HCT116 (cell line): ENCODE measurements at regions of chr15 and their contacts with region 1.

Region 1: DNA sequence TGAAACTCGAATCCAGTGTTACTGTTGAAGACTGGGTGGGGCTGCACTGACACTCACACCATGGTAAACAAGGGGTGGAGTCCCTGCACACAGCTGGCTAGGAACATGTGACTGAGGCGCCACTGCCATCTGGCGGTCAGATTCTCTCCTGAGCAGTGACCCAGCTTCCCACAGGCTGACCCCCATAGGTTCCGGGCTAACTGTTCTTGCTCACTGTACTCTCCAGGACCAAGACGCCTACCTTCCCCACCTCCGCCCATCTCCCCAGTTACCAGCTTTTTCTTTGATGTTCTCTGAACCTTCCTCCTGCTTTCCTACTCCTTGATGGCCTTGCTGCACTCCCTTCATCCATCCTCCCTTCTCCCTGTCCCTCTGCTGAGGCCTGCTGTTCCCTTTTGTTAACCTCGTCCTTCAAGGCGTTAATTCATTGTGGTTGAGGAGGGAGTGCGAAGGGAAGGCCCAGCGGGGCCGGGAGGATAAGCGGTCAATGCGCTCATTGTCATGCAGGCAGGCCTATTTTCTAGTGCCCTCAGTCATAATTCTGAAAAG is 115.2 kb downstream of the ATP8B4 start:
- DNase-seq: peak; percentile 80
- ATAC-seq: peak; percentile 100
- H3K4me3 ChIP-seq: no peak overlapping the region
- H3K27ac ChIP-seq: no peak overlapping the region
- H3K4me1 ChIP-seq: peaks cover 2 to 5% of the 10 kb centered on the region in 2 experiments; a peak in 3 of 4 replicates
- H3K27me3 ChIP-seq: no peaks in the 10 kb centered on the region
- CTCF ChIP-seq: peak; percentile 38 to 89 (median 84); a peak in 5 of 6 replicates
- POLR2A ChIP-seq: no peak
- RAD21 ChIP-seq: peak; percentile 77

Region 2: GRCh38 chr15:49471733-49472132 is 532.1 kb before region 1 on chr15:
- CTCF ChIA-PET with region 1: interaction called, 10 read pairs
- POLR2A ChIA-PET with region 1: no interaction called
- RAD21 ChIA-PET with region 1: no interaction called
- intact Hi-C with region 1: no loop called
- DNase-seq: no peak
- ATAC-seq: no peak
- H3K4me3 ChIP-seq: no peak overlapping the region
- H3K27ac ChIP-seq: no peak overlapping the region
- H3K4me1 ChIP-seq: no peaks in the 10 kb centered on the region
- H3K27me3 ChIP-seq: no peaks in the 10 kb centered on the region
- CTCF ChIP-seq: no peak
- POLR2A ChIP-seq: no peak
- RAD21 ChIP-seq: no peak

Region 3: GRCh38 chr15:50084932-50085331 is 81.1 kb after region 1 on chr15:
- CTCF ChIA-PET with region 1: no interaction called
- POLR2A ChIA-PET with region 1: no interaction called
- RAD21 ChIA-PET with region 1: no interaction called
- intact Hi-C with region 1: no loop called
- DNase-seq: no peak
- ATAC-seq: no peak
- H3K4me3 ChIP-seq: no peak overlapping the region
- H3K27ac ChIP-seq: no peak overlapping the region
- H3K4me1 ChIP-seq: no peaks in the 10 kb centered on the region
- H3K27me3 ChIP-seq: no peaks in the 10 kb centered on the region
- CTCF ChIP-seq: no peak
- POLR2A ChIP-seq: no peak
- RAD21 ChIP-seq: no peak